ENCODE measurements at regions of chr1 and their contacts with region 1.

Region 1: DNA sequence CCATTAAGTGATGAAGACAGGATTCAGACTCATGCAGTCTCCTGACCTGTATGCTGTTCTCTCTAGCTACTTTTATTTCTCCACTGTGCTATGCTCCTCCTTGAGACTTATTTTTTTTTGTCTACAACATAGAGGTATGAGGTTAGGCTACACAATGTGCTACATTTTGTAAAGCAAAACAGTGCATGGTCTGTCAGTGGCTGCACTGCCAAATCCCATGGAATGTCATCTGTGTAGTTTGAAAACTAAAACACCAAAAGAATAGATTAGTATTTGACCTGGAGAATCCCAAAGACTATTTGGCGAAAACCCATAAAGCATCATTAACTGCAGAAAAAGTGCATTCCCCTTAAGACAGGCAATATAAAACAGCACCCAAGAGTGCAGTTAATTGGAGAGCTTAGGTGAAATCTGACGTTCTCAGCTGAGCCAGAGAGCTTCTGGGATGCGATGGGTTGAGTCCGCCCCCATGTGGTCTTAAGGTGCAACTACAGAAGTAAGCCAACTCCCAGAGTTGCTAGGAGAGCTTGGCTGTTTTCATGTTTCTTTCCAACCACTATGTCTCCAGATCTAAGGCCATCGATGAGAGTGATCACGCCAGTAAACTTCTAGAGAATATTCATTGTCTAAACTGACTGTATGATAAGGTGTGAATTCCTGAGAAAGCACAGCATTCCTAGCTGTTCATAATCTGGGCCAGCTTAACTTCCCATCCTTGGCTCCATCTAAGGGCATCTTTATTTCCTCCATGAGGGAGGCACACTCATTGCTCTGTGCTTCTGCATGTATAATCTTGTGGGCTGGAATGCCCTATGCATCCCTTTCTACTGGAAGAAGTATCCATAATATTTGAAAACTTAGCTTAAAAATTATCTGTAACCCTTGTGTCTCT is 20.7 kb upstream of the CYP2J2 start:
- DNase-seq: peak; percentile 67
- H3K4me3 ChIP-seq: no peak overlapping the region
- H3K27ac ChIP-seq: no peak overlapping the region
- H3K4me1 ChIP-seq: no peaks in the 10 kb centered on the region
- H3K27me3 ChIP-seq: peaks cover 0 to 10% of the 10 kb centered on the region in 2 experiments
- CTCF ChIP-seq: peak; percentile 84 to 85
- POLR2A ChIP-seq: no peak

Region 2: GRCh38 chr1:58515794-58516401 is 1431.4 kb before region 1 on chr1:
- CTCF ChIA-PET with region 1: interaction called, 13 read pairs
- POLR2A ChIA-PET with region 1: no interaction called
- dilution Hi-C with region 1: no loop called
- intact Hi-C with region 1: loop called (anchors 1 kb)
- DNase-seq: peak; percentile 71
- H3K4me3 ChIP-seq: no peak overlapping the region
- H3K27ac ChIP-seq: no peak overlapping the region
- H3K4me1 ChIP-seq: no peaks in the 10 kb centered on the region
- H3K27me3 ChIP-seq: no peaks in the 10 kb centered on the region
- CTCF ChIP-seq: peak; percentile 37 to 58
- POLR2A ChIP-seq: no peak

Region 3: DNA sequence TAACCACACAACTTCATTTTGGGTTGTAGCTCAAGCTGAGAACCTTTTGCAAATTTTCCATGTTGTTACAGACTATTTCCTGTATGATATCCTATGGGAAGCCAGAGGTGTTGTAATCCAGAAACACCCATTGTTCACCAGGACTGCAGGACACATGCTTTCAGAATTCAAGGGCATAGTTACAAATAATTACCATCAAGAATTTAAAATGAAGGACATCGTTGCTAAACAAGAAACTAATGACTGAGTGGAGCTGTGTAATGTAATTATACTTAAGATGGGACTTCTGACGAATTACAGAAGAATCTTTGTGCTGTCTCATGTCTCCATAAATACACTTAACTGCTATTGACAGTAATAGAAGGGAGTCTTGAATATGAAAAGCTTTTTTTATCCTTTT is 180.2 kb before region 1 on chr1:
- CTCF ChIA-PET with region 1: interaction called, 16 read pairs
- POLR2A ChIA-PET with region 1: no interaction called
- dilution Hi-C with region 1: no loop called
- intact Hi-C with region 1: no loop called
- DNase-seq: peak; percentile 88
- H3K4me3 ChIP-seq: no peak overlapping the region
- H3K27ac ChIP-seq: no peak overlapping the region
- H3K4me1 ChIP-seq: peaks cover 14% of the 10 kb centered on the region
- H3K27me3 ChIP-seq: no peaks in the 10 kb centered on the region
- CTCF ChIP-seq: no peak
- POLR2A ChIP-seq: no peak

Region 4: GRCh38 chr1:59879574-59879973 is 67.7 kb before region 1 on chr1:
- CTCF ChIA-PET with region 1: interaction called, 366 read pairs
- POLR2A ChIA-PET with region 1: no interaction called
- dilution Hi-C with region 1: no loop called
- intact Hi-C with region 1: loop called (anchors 1 kb)
- DNase-seq: peak; percentile 67
- H3K4me3 ChIP-seq: no peak overlapping the region
- H3K27ac ChIP-seq: peak overlapping the region; percentile 35
- H3K4me1 ChIP-seq: peaks cover 8% of the 10 kb centered on the region
- H3K27me3 ChIP-seq: no peaks in the 10 kb centered on the region
- CTCF ChIP-seq: peak; percentile 57 to 60
- POLR2A ChIP-seq: no peak

Region 5: DNA sequence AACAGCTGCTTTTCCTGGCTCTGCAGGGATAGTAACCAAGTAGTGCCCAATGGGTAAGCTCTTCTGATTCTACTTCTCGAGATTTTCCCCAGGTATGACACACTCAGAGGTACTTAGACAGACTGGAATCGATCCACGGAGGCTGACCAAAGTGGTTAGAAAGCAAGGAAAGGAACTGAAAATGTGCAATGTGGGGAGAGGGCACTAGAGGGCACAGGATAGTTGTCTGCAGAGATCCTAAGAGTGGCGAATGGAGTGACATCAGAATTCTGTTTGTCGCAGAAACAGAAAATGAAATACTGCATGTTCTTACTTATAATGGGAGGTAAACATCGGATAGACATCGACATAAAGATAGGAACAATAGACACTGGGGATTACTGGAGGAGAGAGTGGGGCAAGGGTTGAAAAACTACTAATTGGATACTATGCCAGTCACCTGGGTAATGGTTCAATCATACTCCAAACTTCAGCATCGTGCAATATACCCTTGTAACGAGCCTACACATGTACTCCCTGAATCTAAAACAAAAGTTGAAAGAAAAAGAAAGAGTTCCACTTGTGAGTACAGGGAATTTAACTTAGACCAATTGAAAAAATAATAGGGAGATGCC is 44.0 kb before region 1 on chr1:
- CTCF ChIA-PET with region 1: interaction called, 37 read pairs
- POLR2A ChIA-PET with region 1: no interaction called
- dilution Hi-C with region 1: no loop called
- intact Hi-C with region 1: loop called (anchors 1 kb)
- DNase-seq: peak; percentile 10
- H3K4me3 ChIP-seq: no peak overlapping the region
- H3K27ac ChIP-seq: no peak overlapping the region
- H3K4me1 ChIP-seq: no peaks in the 10 kb centered on the region
- H3K27me3 ChIP-seq: no peaks in the 10 kb centered on the region
- CTCF ChIP-seq: peak; percentile 28 to 52
- POLR2A ChIP-seq: no peak

Region 6: GRCh38 chr1:59971464-59971911 is 24.2 kb after region 1 on chr1:
- CTCF ChIA-PET with region 1: interaction called, 23 read pairs
- POLR2A ChIA-PET with region 1: no interaction called
- dilution Hi-C with region 1: no loop called
- intact Hi-C with region 1: no loop called
- DNase-seq: peak; percentile 63
- H3K4me3 ChIP-seq: no peak overlapping the region
- H3K27ac ChIP-seq: no peak overlapping the region
- H3K4me1 ChIP-seq: peaks cover 2% of the 10 kb centered on the region
- H3K27me3 ChIP-seq: peaks cover 0 to 11% of the 10 kb centered on the region in 2 experiments
- CTCF ChIP-seq: peak; percentile 83 to 91
- POLR2A ChIP-seq: no peak

Region 7: GRCh38 chr1:60746278-60746791 is 799.0 kb after region 1 on chr1:
- CTCF ChIA-PET with region 1: no interaction called
- POLR2A ChIA-PET with region 1: no interaction called
- dilution Hi-C with region 1: no loop called
- intact Hi-C with region 1: no loop called
- DNase-seq: no peak
- H3K4me3 ChIP-seq: no peak overlapping the region
- H3K27ac ChIP-seq: no peak overlapping the region
- H3K4me1 ChIP-seq: no peaks in the 10 kb centered on the region
- H3K27me3 ChIP-seq: no peaks in the 10 kb centered on the region
- CTCF ChIP-seq: no peak
- POLR2A ChIP-seq: no peak

Measured in endothelial cell of umbilical vein (primary cell).